Caco-2 (cell line): ENCODE measurements at regions of chr20 and their contacts with region 1.

Region 1: DNA sequence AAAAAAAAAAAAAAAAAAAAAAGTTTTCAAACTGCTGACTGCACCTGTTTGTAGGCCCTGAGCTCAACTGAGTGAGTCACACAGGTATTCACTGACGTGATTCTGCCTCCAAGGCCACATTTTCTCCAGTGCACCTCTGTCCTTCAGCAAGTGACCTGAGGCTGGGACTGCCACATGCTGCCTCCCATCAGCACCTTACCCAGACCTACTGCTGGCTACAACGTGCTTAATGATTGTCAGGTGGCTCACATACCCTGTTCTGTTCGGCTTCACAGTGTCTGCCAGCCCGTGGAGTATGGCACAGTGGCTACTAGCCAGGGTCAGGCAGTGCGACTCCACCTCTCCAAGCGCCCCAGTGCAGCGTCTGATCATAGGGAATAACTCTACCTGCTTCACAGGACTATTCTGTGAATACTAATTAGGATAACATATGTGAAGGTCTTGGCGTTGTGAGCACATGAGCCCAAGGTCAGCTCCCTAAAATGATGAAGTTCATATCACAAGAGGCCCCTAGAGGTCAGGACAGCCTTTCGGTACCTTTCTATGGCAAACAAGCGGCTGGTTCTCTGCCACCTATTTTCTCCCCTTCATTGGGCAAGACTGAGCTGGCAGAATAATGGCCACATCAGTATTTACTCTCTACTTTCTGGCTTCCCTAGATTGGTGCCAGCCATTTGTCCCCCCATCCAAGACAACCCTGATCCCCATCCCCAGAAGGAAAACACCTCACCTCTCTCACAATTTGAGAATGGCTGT is 28.1 kb downstream of the RIPOR3 start:
- DNase-seq: peak; percentile 82 to 88
- H3K4me3 ChIP-seq: no peak overlapping the region
- H3K4me3 Mint-ChIP-seq: no peak overlapping the region
- H3K27ac Mint-ChIP-seq: peak overlapping the region; percentile 87
- H3K4me1 ChIP-seq: peaks cover 88% of the 10 kb centered on the region
- H3K4me1 Mint-ChIP-seq: peaks cover 84% of the 10 kb centered on the region
- H3K27me3 ChIP-seq: no peaks in the 10 kb centered on the region
- H3K27me3 Mint-ChIP-seq: no peaks in the 10 kb centered on the region
- CTCF ChIP-seq: peak; percentile 82 to 93

Region 2: GRCh38 chr20:50635667-50636503 is 27.4 kb before region 1 on chr20:
- CTCF ChIA-PET with region 1: interaction called, 17 read pairs
- POLR2A ChIA-PET with region 1: interaction called, 6 read pairs
- intact Hi-C with region 1: loop called (anchors 2 kb)
- DNase-seq: peak; percentile 92 to 94
- H3K4me3 ChIP-seq: no peak overlapping the region
- H3K4me3 Mint-ChIP-seq: peak overlapping the region; percentile 50
- H3K27ac Mint-ChIP-seq: peak overlapping the region; percentile 53
- H3K4me1 ChIP-seq: peaks cover 21% of the 10 kb centered on the region
- H3K4me1 Mint-ChIP-seq: peaks cover 17% of the 10 kb centered on the region
- H3K27me3 ChIP-seq: no peaks in the 10 kb centered on the region
- H3K27me3 Mint-ChIP-seq: no peaks in the 10 kb centered on the region
- CTCF ChIP-seq: peak; percentile 99

Region 3: GRCh38 chr20:50690634-50691572 is 27.6 kb after region 1 on chr20 and contains the start of gene RIPOR3:
- CTCF ChIA-PET with region 1: interaction called, 11 read pairs
- POLR2A ChIA-PET with region 1: interaction called, 3 read pairs
- intact Hi-C with region 1: no loop called
- DNase-seq: no peak
- H3K4me3 ChIP-seq: no peak within 1 kb of the TSS
- H3K4me3 Mint-ChIP-seq: no peak within 1 kb of the TSS
- H3K27ac Mint-ChIP-seq: no peak within 1 kb of the TSS
- H3K4me1 ChIP-seq: peaks cover 28% of the 10 kb centered on the region
- H3K4me1 Mint-ChIP-seq: peaks cover 20% of the 10 kb centered on the region
- H3K27me3 ChIP-seq: no peaks in the 10 kb centered on the region
- H3K27me3 Mint-ChIP-seq: no peaks in the 10 kb centered on the region
- CTCF ChIP-seq: no peak
- total RNA-seq, gene RIPOR3: 0.18 and 0.67 TPM in 2 replicates

Region 4: GRCh38 chr20:50724851-50725721 is 61.8 kb after region 1 on chr20:
- CTCF ChIA-PET with region 1: interaction called, 31 read pairs
- POLR2A ChIA-PET with region 1: interaction called, 36 read pairs
- intact Hi-C with region 1: no loop called
- DNase-seq: peak; percentile 81 to 92
- H3K4me3 ChIP-seq: no peak overlapping the region
- H3K4me3 Mint-ChIP-seq: no peak overlapping the region
- H3K27ac Mint-ChIP-seq: no peak overlapping the region
- H3K4me1 ChIP-seq: peaks cover 70% of the 10 kb centered on the region
- H3K4me1 Mint-ChIP-seq: peaks cover 30% of the 10 kb centered on the region
- H3K27me3 ChIP-seq: no peaks in the 10 kb centered on the region
- H3K27me3 Mint-ChIP-seq: no peaks in the 10 kb centered on the region
- CTCF ChIP-seq: no peak

Region 5: DNA sequence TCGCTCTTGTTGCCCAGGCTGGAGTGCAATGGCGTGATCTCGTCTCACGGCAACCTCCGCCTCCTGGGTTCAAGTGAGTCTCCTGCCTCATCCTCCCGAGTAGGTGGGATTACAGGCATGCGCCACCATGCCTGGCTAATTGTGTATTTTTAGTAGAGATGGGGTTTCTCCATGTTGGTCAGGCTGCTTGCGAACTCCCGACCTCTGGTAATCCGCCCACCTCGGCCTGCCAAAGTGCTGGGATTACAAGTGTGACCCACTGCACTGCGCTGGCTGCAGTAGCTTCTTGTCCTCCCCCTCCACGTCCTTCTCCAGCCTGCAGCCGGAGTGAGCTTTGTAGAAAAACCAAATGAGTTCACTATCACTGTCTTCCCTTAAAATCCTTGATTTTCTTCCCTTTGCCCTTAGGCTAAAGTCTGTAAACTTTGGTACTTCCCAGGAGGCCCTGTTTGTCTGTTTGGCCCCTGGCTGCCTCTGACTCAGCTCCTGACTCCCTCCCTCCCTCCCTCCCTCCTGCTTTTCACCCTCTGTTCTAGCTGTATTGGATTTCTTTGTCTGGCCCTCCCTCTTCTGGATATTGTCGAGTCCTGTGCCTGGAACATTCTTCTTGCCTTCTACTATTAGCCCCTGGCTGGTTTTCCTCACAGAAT is 81.0 kb after region 1 on chr20:
- CTCF ChIA-PET with region 1: interaction called, 88 read pairs
- POLR2A ChIA-PET with region 1: interaction called, 16 read pairs
- intact Hi-C with region 1: loop called (anchors 1 kb)
- DNase-seq: peak; percentile 90 to 98
- H3K4me3 ChIP-seq: peak overlapping the region; percentile 8
- H3K4me3 Mint-ChIP-seq: peak overlapping the region; percentile 60
- H3K27ac Mint-ChIP-seq: peak overlapping the region; percentile 76
- H3K4me1 ChIP-seq: peaks cover 93% of the 10 kb centered on the region
- H3K4me1 Mint-ChIP-seq: peaks cover 75% of the 10 kb centered on the region
- H3K27me3 ChIP-seq: no peaks in the 10 kb centered on the region
- H3K27me3 Mint-ChIP-seq: no peaks in the 10 kb centered on the region
- CTCF ChIP-seq: peak; percentile 62 to 75

Region 6: DNA sequence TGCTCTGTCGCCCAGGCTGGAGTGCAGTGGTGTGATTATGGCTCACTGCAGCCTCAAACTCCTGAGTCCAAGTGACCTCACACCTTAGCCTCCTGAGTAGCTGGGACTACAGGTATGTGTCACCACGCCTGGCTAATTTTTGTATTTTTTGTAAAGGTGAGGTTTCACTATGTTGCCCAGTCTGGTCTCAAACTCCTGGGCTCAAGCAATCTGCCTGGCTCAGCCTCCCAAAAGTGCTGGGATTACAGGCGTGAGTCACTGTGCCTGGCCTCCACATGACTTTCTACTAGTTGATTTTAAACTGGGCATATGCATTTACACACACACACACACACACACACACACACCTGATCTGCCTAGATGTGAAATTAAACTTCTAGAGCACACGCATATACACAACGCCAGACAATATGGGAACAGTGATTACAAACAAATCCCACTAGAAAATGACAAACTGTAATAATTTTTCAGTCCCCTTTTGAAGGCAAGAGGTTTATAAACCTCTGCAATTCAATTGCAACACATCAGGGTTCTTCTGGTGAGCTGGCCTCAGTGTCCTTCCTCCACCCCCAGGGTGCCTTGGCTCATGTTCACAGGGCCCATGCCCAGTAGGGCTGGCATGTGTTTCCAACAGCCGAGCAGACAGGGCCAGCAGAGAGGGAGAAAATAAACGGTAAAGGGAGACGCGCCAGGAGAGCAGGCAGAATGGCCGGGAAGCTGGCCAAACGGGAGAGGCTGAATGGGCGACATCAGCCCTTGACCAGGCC is 99.3 kb after region 1 on chr20:
- CTCF ChIA-PET with region 1: interaction called, 8 read pairs
- POLR2A ChIA-PET with region 1: interaction called, 5 read pairs
- intact Hi-C with region 1: loop called (anchors 1 kb)
- DNase-seq: peak; percentile 54 to 72
- H3K4me3 ChIP-seq: no peak overlapping the region
- H3K4me3 Mint-ChIP-seq: peak overlapping the region; percentile 78
- H3K27ac Mint-ChIP-seq: peak overlapping the region; percentile 100
- H3K4me1 ChIP-seq: peaks cover 87% of the 10 kb centered on the region
- H3K4me1 Mint-ChIP-seq: peaks cover 82% of the 10 kb centered on the region
- H3K27me3 ChIP-seq: no peaks in the 10 kb centered on the region
- H3K27me3 Mint-ChIP-seq: no peaks in the 10 kb centered on the region
- CTCF ChIP-seq: no peak

Region 7: DNA sequence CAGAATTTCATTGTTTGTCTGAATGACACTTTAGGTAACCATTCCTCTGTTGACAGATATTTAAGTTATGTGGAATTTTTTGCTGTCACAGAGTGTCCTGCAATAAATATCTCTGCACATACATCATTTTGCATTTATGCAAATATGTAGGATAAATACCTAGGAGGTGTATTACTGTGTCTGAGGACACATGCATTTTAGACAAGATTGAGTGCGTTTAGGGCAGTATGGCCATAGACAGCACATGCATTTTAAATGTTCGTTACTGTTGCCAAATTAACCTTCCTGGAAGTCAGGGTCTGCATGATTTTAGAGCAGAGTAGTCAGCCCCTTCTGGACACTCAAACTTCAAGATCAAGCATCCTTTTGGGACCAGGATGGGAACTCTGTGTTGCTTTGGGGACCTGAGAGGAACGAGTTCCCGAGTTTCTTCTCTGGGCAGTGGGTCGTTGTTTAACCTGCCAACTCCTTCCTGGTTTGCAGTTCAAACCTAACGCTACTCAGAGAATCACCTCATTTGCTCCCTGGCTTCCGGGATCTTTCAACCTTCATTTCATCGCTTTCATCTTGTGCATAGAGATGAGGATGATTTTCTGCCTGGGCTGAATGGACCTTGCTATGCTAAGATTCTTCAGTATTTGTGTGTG is 141.3 kb after region 1 on chr20:
- CTCF ChIA-PET with region 1: no interaction called
- POLR2A ChIA-PET with region 1: no interaction called
- intact Hi-C with region 1: no loop called
- DNase-seq: no peak
- H3K4me3 ChIP-seq: no peak overlapping the region
- H3K4me3 Mint-ChIP-seq: no peak overlapping the region
- H3K27ac Mint-ChIP-seq: no peak overlapping the region
- H3K4me1 ChIP-seq: peaks cover 22% of the 10 kb centered on the region; the same call in 1 of the 2 replicates
- H3K4me1 Mint-ChIP-seq: peaks cover 17% of the 10 kb centered on the region
- H3K27me3 ChIP-seq: no peaks in the 10 kb centered on the region
- H3K27me3 Mint-ChIP-seq: no peaks in the 10 kb centered on the region
- CTCF ChIP-seq: no peak